ENCODE measurements at regions of chr2 and their contacts with region 1.

Region 1: GRCh38 chr2:241877989-241878970 is 8.8 kb downstream of the RTP5 start:
- DNase-seq: peak; percentile 92

Region 2: DNA sequence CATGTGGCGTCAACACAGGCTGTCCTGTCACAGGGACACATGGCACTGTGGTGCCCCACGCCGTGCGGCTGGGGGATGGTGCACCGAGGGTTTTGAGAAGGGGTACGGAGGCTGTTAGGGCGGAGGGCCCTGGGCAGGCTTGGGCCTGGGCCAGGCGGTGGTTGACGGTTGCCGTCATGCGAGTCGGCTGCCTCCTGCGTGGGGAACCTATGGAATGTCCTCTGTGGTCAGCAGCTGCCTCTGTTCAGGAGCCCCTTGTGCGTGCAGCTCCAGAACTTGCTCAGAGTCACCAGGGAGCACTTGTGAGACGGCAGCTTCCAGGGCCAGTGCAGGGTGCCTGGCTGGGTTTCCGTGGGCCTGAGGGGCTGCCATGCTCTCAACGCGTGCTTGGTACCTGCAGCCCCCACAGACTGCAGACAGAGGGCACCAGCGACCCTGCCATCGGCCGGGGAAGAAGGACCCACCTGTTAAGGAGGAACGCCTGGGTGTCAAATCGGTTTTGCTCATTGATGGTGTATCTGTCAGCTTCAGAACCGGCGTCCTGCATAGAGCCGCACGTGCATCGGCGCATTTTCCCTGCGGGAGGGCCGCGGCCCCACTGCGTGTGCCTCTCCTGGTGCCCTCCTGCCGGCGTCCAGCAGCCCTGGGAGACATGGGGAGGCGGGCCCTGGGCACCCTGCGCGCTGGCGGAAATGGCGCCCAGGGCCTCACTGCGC is 153.9 kb before region 1 on chr2:
- intact Hi-C with region 1: loop called in 1 of 2 experiments (anchors 10 kb)
- DNase-seq: no peak

Region 3: GRCh38 chr2:241734467-241735208 is 143.6 kb before region 1 on chr2 and contains the start of gene D2HGDH:
- intact Hi-C with region 1: loop called (anchors 5 to 10 kb)
- DNase-seq: peak; percentile 98
- total RNA-seq, gene D2HGDH: 12.4 to 18.8 TPM

Region 4: GRCh38 chr2:241774646-241775222 is 103.5 kb before region 1 on chr2:
- intact Hi-C with region 1: loop called in 1 of 2 experiments (anchors 10 kb)
- DNase-seq: peak; percentile 82

Measured in posterior vena cava (tissue), 2 donors.